ENCODE measurements at regions of chr13 and their contacts with region 1.

Region 1: DNA sequence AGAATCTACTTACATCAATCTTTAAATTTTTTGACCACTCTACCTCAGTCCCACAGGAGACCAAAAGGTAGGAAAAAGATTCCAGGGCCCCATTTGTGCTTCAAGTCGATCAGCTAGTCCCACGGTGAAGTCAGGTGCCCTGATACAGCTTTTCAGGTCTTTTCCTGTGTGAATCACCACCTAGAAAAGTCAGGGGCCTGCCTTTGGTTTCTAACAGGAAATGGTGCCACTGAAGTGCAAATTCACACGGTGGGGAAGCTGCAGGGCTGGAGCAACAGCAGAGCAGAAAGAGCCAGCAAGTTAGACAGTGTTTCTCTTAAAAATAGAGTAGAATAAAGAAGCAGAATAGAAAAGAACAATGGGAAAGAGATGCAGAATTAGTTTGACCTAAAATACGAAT is 107.5 kb downstream of the KLF12 start:
- DNase-seq: peak; percentile 82
- H3K4me3 ChIP-seq: peak overlapping the region; percentile 56
- H3K27ac ChIP-seq: peak overlapping the region; percentile 83
- H3K4me1 ChIP-seq: peaks cover 48% of the 10 kb centered on the region
- CTCF ChIP-seq: no peak

Region 2: GRCh38 chr13:73973156-73973555 is 53.6 kb before region 1 on chr13:
- CTCF ChIA-PET with region 1: interaction called, 3 read pairs
- POLR2A ChIA-PET with region 1: interaction called, 17 read pairs
- intact Hi-C with region 1: loop called (anchors 2 kb)
- DNase-seq: peak; percentile 73
- H3K4me3 ChIP-seq: peak overlapping the region; percentile 68
- H3K27ac ChIP-seq: peak overlapping the region; percentile 99
- H3K4me1 ChIP-seq: peaks cover 96% of the 10 kb centered on the region
- CTCF ChIP-seq: no peak

Region 3: GRCh38 chr13:73991884-73992283 is 34.9 kb before region 1 on chr13:
- CTCF ChIA-PET with region 1: interaction called, 3 read pairs
- POLR2A ChIA-PET with region 1: interaction called, 10 read pairs
- intact Hi-C with region 1: loop called (anchors 2 kb)
- DNase-seq: peak; percentile 84
- H3K4me3 ChIP-seq: peak overlapping the region; percentile 56
- H3K27ac ChIP-seq: peak overlapping the region; percentile 99
- H3K4me1 ChIP-seq: peaks cover 98% of the 10 kb centered on the region
- CTCF ChIP-seq: no peak

Region 4: GRCh38 chr13:74142257-74142656 is 115.5 kb after region 1 on chr13:
- CTCF ChIA-PET with region 1: no interaction called
- POLR2A ChIA-PET with region 1: no interaction called
- intact Hi-C with region 1: no loop called
- DNase-seq: no peak
- H3K4me3 ChIP-seq: no peak overlapping the region
- H3K27ac ChIP-seq: no peak overlapping the region
- H3K4me1 ChIP-seq: no peaks in the 10 kb centered on the region
- CTCF ChIP-seq: no peak

Region 5: DNA sequence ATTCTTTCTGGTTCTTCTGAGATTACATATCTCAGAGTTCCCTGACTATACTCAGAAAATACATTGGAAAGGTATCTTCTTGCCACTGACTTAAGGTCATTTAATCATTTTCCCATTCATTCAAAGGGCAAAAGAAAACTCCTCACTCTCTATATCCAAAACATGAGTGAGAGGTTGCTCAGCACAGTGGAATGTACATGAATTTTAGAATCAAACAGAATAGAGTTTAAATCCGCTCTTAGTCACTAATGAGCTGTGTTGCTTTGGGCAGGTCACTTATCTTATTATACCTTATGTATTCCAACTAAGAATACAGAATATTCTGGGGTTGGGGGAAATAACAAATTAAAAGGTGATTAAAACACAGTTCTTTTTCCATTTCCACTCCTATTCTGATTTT is 560.1 kb after region 1 on chr13:
- CTCF ChIA-PET with region 1: no interaction called
- POLR2A ChIA-PET with region 1: no interaction called
- intact Hi-C with region 1: no loop called
- DNase-seq: no peak
- H3K4me3 ChIP-seq: no peak overlapping the region
- H3K27ac ChIP-seq: no peak overlapping the region
- H3K4me1 ChIP-seq: no peaks in the 10 kb centered on the region
- CTCF ChIP-seq: no peak

Measured in OCI-LY7 (cell line).